Left cardiac atrium (tissue), 4 donors: ENCODE measurements at regions of chr12 and their contacts with region 1.

Region 1: GRCh38 chr12:110813285-110813684 is 33.5 kb upstream of the CCDC63 start:
- DNase-seq: no peak
- ATAC-seq: no peak

Region 2: GRCh38 chr12:110531741-110532333 is 281.4 kb before region 1 on chr12:
- intact Hi-C with region 1: no loop called
- DNase-seq: no peak
- ATAC-seq: peak in 1 of 2 donors; percentile 73

Region 3: DNA sequence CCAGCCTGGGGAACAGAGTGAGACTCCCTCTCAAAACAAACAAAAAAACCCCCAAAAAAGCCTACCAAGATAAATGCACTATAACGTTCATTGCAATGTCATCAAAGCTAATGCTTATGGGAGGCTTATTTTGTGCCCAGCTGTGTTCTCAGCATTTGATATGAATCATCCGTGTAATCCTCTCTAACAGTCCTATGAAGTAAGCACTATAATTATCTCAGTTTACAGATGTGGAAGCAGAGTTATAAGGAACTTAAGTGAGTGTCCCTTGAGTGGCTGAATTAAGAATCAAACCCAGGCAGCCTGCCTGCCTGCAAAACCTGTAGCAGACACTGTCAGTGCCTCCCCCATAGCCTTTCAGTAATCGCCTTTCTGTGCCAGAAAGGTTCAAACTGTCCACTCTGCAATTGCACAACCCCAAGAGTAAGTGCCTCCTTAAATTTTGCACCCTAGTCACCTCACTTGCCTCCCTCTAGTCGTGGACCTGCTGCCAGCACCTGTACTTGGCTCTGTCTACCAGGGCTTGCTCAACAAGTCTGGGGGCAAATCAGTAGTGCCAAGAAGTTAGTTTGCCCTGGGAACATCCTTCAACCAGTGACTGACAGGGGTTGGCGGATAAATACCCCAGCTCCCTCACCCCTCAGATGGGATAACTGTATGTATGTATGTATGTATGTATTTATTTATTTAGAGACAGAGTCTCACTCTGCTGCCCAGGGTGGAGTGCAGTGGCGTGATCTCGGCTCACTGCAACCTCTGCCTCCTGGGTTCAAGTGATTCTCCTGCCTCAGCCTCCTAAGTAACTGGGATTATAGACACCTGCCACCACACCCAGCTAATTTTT is 46.8 kb before region 1 on chr12:
- intact Hi-C with region 1: loop called in 1 of 2 experiments (anchors 10 kb)
- DNase-seq: no peak
- ATAC-seq: peak in 1 of 2 donors; percentile 55

Region 4: DNA sequence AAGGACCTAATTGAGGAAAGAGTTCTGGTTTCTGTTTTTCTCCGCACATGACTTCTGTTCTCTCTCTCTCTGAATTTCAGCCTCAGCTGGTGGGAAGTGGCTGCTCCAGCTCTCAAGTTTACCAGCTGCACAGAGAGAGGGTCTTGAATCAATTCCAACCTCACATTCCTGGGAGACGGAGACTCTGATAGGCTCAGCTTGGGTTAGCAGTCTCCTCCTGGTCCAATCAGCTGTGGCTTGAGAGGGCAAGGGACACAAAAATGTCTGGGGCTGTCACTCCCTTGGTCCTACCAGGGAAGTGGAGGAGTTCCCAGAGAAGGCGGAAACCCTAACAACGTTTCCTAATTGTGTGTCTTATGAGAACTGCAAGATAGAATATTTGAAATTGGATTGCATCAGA is 40.6 kb after region 1 on chr12:
- intact Hi-C with region 1: no loop called
- DNase-seq: no peak
- ATAC-seq: peak; percentile 30 to 50

Region 5: DNA sequence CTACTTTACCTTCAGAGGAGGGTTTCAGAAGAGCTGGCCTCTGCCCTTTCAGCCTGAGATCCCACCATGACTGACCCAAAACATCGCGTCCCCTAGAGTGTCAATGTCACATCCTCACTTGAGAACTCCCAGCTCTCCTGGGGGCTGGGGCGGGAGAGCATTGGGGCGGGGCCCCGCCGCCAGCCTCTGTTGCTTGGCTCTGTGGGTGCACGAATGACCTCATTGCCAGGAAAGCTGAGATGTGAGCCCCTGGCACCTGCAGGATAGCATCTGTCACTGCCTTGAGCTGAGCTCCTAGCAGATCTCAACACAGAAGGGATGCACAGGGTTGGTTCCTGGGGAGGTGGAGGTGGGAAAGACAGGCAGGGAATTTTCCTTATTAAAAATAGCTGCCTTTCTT is 127.6 kb after region 1 on chr12:
- intact Hi-C with region 1: no loop called
- DNase-seq: no peak
- ATAC-seq: no peak

Region 6: GRCh38 chr12:112738531-112738930 is 1925.2 kb after region 1 on chr12:
- intact Hi-C with region 1: no loop called
- DNase-seq: no peak
- ATAC-seq: peak in 1 of 2 donors; percentile 34